Right cardiac atrium (tissue), 5 donors: ENCODE measurements at regions of chr4 and their contacts with region 1.

Region 1: DNA sequence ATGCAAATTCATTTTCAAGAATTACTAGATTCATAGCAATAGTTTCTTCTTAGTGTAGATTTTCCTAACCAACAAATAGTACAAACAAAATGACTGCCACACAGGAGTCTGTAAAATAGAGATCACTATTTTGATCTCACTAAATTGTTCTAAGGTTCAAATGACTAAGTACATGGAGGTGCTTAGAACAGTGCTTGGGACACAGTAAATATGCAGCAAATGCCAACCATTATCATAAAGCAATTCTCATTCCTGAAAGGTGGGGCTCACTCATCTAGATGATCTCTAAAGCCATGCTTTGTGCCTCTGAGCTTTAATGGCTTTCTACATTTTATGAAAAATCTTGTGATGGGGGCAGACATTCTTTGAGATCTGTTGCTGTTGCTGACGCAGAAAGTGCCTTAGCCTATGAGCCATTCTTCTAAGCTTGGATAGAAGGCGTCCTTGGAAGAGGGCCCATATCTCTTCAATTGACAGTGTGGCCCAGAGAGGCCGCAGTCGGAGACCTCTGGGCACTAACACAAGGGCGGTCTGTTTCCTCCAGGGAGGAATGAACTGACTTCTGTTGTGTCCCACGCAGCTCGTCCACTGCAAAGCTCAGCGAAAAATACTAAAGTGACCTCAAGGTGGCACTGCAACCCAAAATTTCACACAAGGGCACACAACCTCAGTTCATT is 23.5 kb downstream of the TLR10 start:
- DNase-seq: peak; percentile 56 to 78 (median 69)
- ATAC-seq: peak; percentile 92 to 94
- H3K4me3 ChIP-seq: no peak overlapping the region
- H3K27ac ChIP-seq: no peak overlapping the region
- H3K4me1 ChIP-seq: peaks cover 3% of the 10 kb centered on the region
- H3K27me3 ChIP-seq: no peaks in the 10 kb centered on the region

Region 2: DNA sequence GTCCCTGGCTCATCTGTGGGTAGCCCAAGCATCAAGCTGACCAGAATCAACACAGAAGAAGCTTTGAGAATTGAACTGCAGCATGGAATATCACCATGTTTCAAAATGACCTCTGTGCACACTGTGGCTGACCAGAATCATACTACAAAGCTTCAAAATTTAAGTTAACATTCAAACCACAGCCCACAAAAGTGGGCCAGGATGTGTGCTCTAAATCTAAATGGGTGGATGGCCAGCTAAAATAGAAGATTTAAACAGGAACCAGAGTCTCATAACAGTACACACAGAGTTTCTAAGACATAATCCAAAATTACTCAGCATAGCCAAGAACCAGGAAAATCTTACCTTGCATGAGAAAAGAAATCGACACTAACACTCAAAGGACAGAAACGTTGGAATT is 49.2 kb before region 1 on chr4:
- intact Hi-C with region 1: no loop called
- DNase-seq: no peak
- ATAC-seq: no peak
- H3K4me3 ChIP-seq: no peak overlapping the region
- H3K27ac ChIP-seq: no peak overlapping the region
- H3K4me1 ChIP-seq: no peaks in the 10 kb centered on the region
- H3K27me3 ChIP-seq: no peaks in the 10 kb centered on the region

Region 3: GRCh38 chr4:38782452-38783108 is 23.3 kb after region 1 on chr4 and contains the start of gene TLR10:
- intact Hi-C with region 1: loop called in 1 of 4 experiments (anchors 2 kb)
- DNase-seq: peak in 2 of 3 donors; percentile 41 to 45
- ATAC-seq: peak; percentile 36 to 65
- H3K4me3 ChIP-seq: no peak within 1 kb of the TSS
- H3K27ac ChIP-seq: no peak within 1 kb of the TSS
- H3K4me1 ChIP-seq: no peaks in the 10 kb centered on the region
- H3K27me3 ChIP-seq: no peaks in the 10 kb centered on the region
- total RNA-seq, gene TLR10: 0.06 TPM in 1 of 4 donors, not detected in the others